Heart right ventricle (tissue), 16 donors: ENCODE measurements at regions of chr3 and their contacts with region 1.

Region 1: GRCh38 chr3:75294124-75294523 is 370.0 kb upstream of the FRG2C start:
- DNase-seq: peak; percentile 22 to 36
- ATAC-seq: peak; percentile 89 to 99 (median 96)
- H3K4me3 ChIP-seq: no peak overlapping the region
- H3K27ac ChIP-seq: no peak overlapping the region
- H3K4me1 ChIP-seq: no peaks in the 10 kb centered on the region
- H3K27me3 ChIP-seq: peaks cover 0 to 17% (median 0%) of the 10 kb centered on the region in 7 donors
- CTCF ChIP-seq: peak; percentile 58 to 83 (median 67)

Region 2: GRCh38 chr3:75329476-75330097 is 35.5 kb after region 1 on chr3:
- intact Hi-C with region 1: no loop called
- DNase-seq: no peak
- ATAC-seq: no peak
- H3K4me3 ChIP-seq: no peak overlapping the region
- H3K27ac ChIP-seq: no peak overlapping the region
- H3K4me1 ChIP-seq: peaks cover 0 to 15% (median 0%) of the 10 kb centered on the region in 9 donors
- H3K27me3 ChIP-seq: peaks cover 0 to 10% (median 0%) of the 10 kb centered on the region in 7 donors
- CTCF ChIP-seq: no peak

Region 3: GRCh38 chr3:75650191-75650590 is 356.1 kb after region 1 on chr3:
- intact Hi-C with region 1: loop called in 2 of 10 experiments (anchors 10 kb)
- DNase-seq: no peak
- ATAC-seq: no peak
- H3K4me3 ChIP-seq: no peak overlapping the region
- H3K27ac ChIP-seq: no peak overlapping the region
- H3K4me1 ChIP-seq: peaks cover 0 to 3% (median 0%) of the 10 kb centered on the region in 9 donors
- H3K27me3 ChIP-seq: peaks cover 1 to 18% (median 16%) of the 10 kb centered on the region in 7 donors
- CTCF ChIP-seq: no peak